Naive thymus-derived CD4-positive, alpha-beta T cell (primary cell): ENCODE measurements at regions of chr2 and their contacts with region 1.

Region 1: GRCh38 chr2:33372940-33373553 is 103.4 kb upstream of the RASGRP3 start:
- DNase-seq: peak in 6 of 9 donors; percentile 2 to 33 (median 27)
- ATAC-seq: peak; percentile 58
- H3K4me3 ChIP-seq: no peak overlapping the region
- H3K4me3 Mint-ChIP-seq: no peak overlapping the region
- H3K27ac ChIP-seq: no peak overlapping the region
- H3K27ac Mint-ChIP-seq: no peak overlapping the region
- H3K4me1 ChIP-seq: no peaks in the 10 kb centered on the region
- H3K4me1 Mint-ChIP-seq: no peaks in the 10 kb centered on the region
- H3K27me3 ChIP-seq: no peaks in the 10 kb centered on the region
- H3K27me3 Mint-ChIP-seq: peaks cover 0 to 11% (median 0%) of the 10 kb centered on the region in 5 donors

Region 2: GRCh38 chr2:32553829-32554432 is 819.1 kb before region 1 on chr2:
- CTCF ChIA-PET with region 1: no interaction called
- POLR2A ChIA-PET with region 1: no interaction called
- intact Hi-C with region 1: loop called in 1 of 2 experiments (anchors 1 kb)
- DNase-seq: peak in 6 of 9 donors; percentile 9 to 44 (median 28)
- ATAC-seq: peak; percentile 80
- H3K4me3 ChIP-seq: no peak overlapping the region
- H3K4me3 Mint-ChIP-seq: no peak overlapping the region
- H3K27ac ChIP-seq: peak overlapping the region; percentile 29
- H3K27ac Mint-ChIP-seq: no peak overlapping the region
- H3K4me1 ChIP-seq: no peaks in the 10 kb centered on the region
- H3K4me1 Mint-ChIP-seq: no peaks in the 10 kb centered on the region
- H3K27me3 ChIP-seq: no peaks in the 10 kb centered on the region
- H3K27me3 Mint-ChIP-seq: no peaks in the 10 kb centered on the region

Region 3: GRCh38 chr2:32772638-32773447 is 600.2 kb before region 1 on chr2:
- CTCF ChIA-PET with region 1: no interaction called
- POLR2A ChIA-PET with region 1: no interaction called
- intact Hi-C with region 1: loop called (anchors 1 to 5 kb)
- DNase-seq: no peak
- ATAC-seq: no peak
- H3K4me3 ChIP-seq: no peak overlapping the region
- H3K4me3 Mint-ChIP-seq: no peak overlapping the region
- H3K27ac ChIP-seq: no peak overlapping the region
- H3K27ac Mint-ChIP-seq: no peak overlapping the region
- H3K4me1 ChIP-seq: no peaks in the 10 kb centered on the region
- H3K4me1 Mint-ChIP-seq: no peaks in the 10 kb centered on the region
- H3K27me3 ChIP-seq: no peaks in the 10 kb centered on the region
- H3K27me3 Mint-ChIP-seq: no peaks in the 10 kb centered on the region

Region 4: GRCh38 chr2:33190393-33190937 is 182.6 kb before region 1 on chr2:
- CTCF ChIA-PET with region 1: no interaction called
- POLR2A ChIA-PET with region 1: no interaction called
- intact Hi-C with region 1: no loop called
- DNase-seq: no peak
- ATAC-seq: no peak
- H3K4me3 ChIP-seq: no peak overlapping the region
- H3K4me3 Mint-ChIP-seq: no peak overlapping the region
- H3K27ac ChIP-seq: no peak overlapping the region
- H3K27ac Mint-ChIP-seq: no peak overlapping the region
- H3K4me1 ChIP-seq: no peaks in the 10 kb centered on the region
- H3K4me1 Mint-ChIP-seq: peaks cover 0 to 2% (median 0%) of the 10 kb centered on the region in 7 donors
- H3K27me3 ChIP-seq: no peaks in the 10 kb centered on the region
- H3K27me3 Mint-ChIP-seq: peaks cover 0 to 13% (median 3%) of the 10 kb centered on the region in 5 donors

Region 5: GRCh38 chr2:33219850-33220275 is 153.2 kb before region 1 on chr2:
- CTCF ChIA-PET with region 1: no interaction called
- POLR2A ChIA-PET with region 1: no interaction called
- intact Hi-C with region 1: loop called in 1 of 2 experiments (anchors 10 kb)
- DNase-seq: no peak
- ATAC-seq: no peak
- H3K4me3 ChIP-seq: no peak overlapping the region
- H3K4me3 Mint-ChIP-seq: no peak overlapping the region
- H3K27ac ChIP-seq: no peak overlapping the region
- H3K27ac Mint-ChIP-seq: no peak overlapping the region
- H3K4me1 ChIP-seq: no peaks in the 10 kb centered on the region
- H3K4me1 Mint-ChIP-seq: peaks cover 0 to 9% (median 0%) of the 10 kb centered on the region in 7 donors
- H3K27me3 ChIP-seq: no peaks in the 10 kb centered on the region
- H3K27me3 Mint-ChIP-seq: peaks cover 0 to 19% (median 4%) of the 10 kb centered on the region in 5 donors

Region 6: DNA sequence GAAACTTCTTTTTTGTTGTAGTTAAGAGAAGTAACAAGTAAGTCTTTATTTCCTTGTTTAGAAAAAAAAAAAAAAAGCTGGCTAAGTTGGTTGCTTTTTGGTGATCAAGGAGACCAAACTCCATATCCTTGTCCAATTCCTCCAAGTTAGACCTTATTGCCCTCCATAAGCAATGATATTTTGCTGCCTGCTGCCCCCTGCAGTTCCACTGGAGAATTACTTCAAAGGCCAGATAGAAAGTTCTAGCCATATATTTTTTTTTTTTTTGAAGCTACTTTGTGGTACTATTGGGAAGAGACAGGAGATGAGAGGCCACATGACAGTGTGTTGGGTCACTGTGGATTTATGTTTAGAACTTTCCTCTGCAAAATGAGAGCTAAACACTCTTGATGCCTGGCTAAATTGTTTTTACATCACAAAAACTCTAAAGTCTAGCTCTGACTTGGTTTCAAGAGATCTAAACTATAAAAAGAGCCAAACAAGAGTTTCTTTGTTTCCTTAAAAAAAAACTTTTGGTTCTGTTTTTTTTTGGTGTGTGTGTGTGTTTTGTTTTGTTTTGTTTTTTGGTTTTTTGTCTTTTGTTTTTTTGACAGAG is 22.7 kb after region 1 on chr2:
- CTCF ChIA-PET with region 1: no interaction called
- POLR2A ChIA-PET with region 1: no interaction called
- intact Hi-C with region 1: no loop called
- DNase-seq: peak in 5 of 9 donors; percentile 0 to 29 (median 14)
- ATAC-seq: peak; percentile 37
- H3K4me3 ChIP-seq: no peak overlapping the region
- H3K4me3 Mint-ChIP-seq: no peak overlapping the region
- H3K27ac ChIP-seq: no peak overlapping the region
- H3K27ac Mint-ChIP-seq: no peak overlapping the region
- H3K4me1 ChIP-seq: no peaks in the 10 kb centered on the region
- H3K4me1 Mint-ChIP-seq: no peaks in the 10 kb centered on the region
- H3K27me3 ChIP-seq: no peaks in the 10 kb centered on the region
- H3K27me3 Mint-ChIP-seq: peaks cover 0 to 6% (median 0%) of the 10 kb centered on the region in 5 donors

Region 7: GRCh38 chr2:33660426-33661118 is 287.5 kb after region 1 on chr2:
- CTCF ChIA-PET with region 1: no interaction called
- POLR2A ChIA-PET with region 1: no interaction called
- intact Hi-C with region 1: no loop called
- DNase-seq: no peak
- ATAC-seq: no peak
- H3K4me3 ChIP-seq: no peak overlapping the region
- H3K4me3 Mint-ChIP-seq: no peak overlapping the region
- H3K27ac ChIP-seq: no peak overlapping the region
- H3K27ac Mint-ChIP-seq: no peak overlapping the region
- H3K4me1 ChIP-seq: no peaks in the 10 kb centered on the region
- H3K4me1 Mint-ChIP-seq: no peaks in the 10 kb centered on the region
- H3K27me3 ChIP-seq: no peaks in the 10 kb centered on the region
- H3K27me3 Mint-ChIP-seq: peaks cover 0 to 9% (median 0%) of the 10 kb centered on the region in 5 donors